Naive thymus-derived CD4-positive, alpha-beta T cell (primary cell): ENCODE measurements at regions of chr11 and their contacts with region 1.

Region 1: GRCh38 chr11:76551400-76551799 is 106.6 kb downstream of the EMSY start:
- DNase-seq: no peak
- ATAC-seq: no peak
- H3K4me3 ChIP-seq: no peak overlapping the region
- H3K4me3 Mint-ChIP-seq: no peak overlapping the region
- H3K27ac ChIP-seq: no peak overlapping the region
- H3K27ac Mint-ChIP-seq: no peak overlapping the region
- H3K4me1 ChIP-seq: no peaks in the 10 kb centered on the region
- H3K4me1 Mint-ChIP-seq: peaks cover 0 to 10% (median 0%) of the 10 kb centered on the region in 7 donors
- H3K27me3 ChIP-seq: no peaks in the 10 kb centered on the region
- H3K27me3 Mint-ChIP-seq: no peaks in the 10 kb centered on the region

Region 2: DNA sequence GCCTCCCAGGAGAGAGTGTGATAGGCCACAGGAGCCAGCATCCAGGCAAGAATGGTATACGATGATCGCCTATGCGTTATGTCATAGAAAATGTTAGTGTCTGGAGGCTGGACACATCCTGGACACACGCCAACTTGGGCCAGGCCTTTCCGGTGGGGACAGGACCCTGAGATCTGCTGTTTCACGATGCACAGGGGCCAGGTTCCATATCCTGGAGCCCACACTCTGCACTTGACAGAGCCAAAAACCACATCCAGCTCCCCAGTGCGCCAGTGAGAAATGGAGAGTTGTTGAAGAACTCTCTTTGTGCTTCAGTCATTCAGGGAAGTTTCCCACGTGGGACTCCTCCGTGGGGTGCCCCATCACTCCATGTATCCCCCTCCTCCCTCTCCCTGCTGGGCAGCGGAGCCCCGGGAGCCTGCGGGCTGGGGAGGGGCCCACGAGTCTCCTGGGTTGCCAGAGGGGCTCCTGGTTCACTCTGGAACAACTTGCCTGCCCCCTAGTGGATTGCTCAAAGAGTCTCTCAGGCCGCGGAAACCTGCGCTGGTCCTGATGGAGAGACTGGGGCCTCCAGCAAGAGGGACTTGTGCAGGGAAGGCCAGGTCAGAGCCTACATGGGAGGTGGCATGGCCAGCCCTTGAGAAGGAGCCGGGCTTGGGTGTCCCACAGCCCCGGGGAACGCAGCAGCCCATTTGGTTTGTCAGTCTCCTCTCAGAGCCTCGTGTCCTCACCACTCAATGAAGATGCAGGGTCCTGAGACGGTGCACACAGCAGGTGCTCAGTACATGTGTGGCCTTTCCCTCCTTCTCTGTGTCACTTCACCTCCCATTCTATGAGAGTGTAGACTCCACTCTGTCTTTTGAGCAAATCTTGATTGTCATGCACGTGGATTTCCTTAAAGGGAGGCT is 129.4 kb after region 1 on chr11:
- CTCF ChIA-PET with region 1: no interaction called
- POLR2A ChIA-PET with region 1: no interaction called
- intact Hi-C with region 1: loop called (anchors 1 to 5 kb)
- DNase-seq: peak in 7 of 9 donors; percentile 21 to 65 (median 38)
- ATAC-seq: peak; percentile 70
- H3K4me3 ChIP-seq: no peak overlapping the region
- H3K4me3 Mint-ChIP-seq: no peak overlapping the region
- H3K27ac ChIP-seq: no peak overlapping the region
- H3K27ac Mint-ChIP-seq: no peak overlapping the region
- H3K4me1 ChIP-seq: peaks cover 0 to 2% of the 10 kb centered on the region in 2 donors
- H3K4me1 Mint-ChIP-seq: peaks cover 0 to 28% (median under 1%) of the 10 kb centered on the region in 7 donors
- H3K27me3 ChIP-seq: no peaks in the 10 kb centered on the region
- H3K27me3 Mint-ChIP-seq: peaks cover 3 to 35% (median 20%) of the 10 kb centered on the region in 5 donors